ENCODE measurements at regions of chr6 and their contacts with region 1.

Region 1: DNA sequence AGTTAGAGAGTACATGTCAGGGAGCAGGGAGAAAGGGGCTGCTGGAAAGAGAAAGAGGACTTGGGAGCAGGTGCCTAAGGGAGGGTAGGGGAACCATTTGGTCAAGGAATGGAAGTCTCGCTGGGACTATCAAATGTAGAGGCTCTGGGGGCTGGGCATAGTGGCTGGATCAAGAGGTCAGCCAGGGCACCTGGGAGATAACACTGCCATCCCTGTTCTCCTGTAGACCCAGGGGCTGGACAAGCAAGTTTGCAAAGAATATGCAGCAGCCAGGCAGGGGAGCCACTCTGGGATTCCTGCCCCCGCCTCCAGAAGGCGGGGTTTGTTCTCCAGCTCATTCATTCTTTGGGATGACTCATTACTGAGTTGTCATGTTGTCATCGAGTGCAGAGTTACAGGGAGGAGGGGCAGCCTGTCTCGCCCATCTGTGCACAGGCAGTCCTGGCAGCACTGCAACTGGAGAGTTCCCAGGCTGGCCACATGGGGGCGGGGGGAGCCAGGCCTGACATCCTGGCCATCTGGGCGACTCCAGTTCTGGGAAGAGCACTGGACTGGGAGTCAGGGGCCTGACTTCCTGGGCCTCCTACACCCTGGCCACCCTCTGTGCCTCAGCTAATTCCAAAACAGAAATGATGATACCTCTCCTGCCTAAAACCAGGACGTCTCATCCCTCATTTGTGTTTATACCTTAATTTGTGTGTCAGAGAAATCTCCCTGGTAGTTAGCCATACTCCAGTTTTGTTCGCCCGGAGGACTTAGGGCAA is 28.2 kb upstream of the ZFAND3 start:
- DNase-seq: peak; percentile 90 to 91
- ATAC-seq: peak; percentile 97 to 99 (median 98)
- H3K4me3 ChIP-seq: no peak overlapping the region
- H3K27ac ChIP-seq: no peak overlapping the region
- H3K4me1 ChIP-seq: peaks cover 0 to 21% (median 11%) of the 10 kb centered on the region in 9 donors
- H3K27me3 ChIP-seq: no peaks in the 10 kb centered on the region
- CTCF ChIP-seq: peak; percentile 88 to 98 (median 96)

Region 2: DNA sequence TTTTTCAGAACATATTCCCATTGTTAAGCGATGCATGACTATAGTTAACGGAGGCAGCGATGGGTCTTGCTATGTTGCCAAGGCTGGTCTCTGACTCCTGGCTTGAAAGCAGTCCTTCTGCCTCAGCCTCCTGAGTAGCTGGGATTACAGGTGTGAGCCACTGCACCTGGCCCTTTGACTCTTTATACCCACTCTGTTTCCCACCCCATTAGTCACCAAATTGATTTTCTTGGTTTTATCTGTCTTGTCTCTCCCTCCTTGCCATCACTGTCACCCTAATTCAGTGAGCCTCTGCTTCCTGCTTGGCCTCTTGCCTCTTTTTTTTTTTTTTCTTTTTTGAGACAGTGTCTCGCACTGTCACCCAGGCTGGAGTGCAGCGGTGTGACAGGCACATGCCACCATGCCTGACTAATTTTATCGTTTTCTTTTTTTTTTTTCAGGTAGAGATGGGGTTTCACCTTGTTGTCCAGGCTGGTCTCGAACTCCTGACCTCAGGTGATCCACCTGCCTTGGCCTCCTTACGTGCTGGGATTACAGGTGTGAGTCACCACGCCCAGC is 59.5 kb after region 1 on chr6:
- intact Hi-C with region 1: loop called in 3 of 10 experiments (anchors 5 to 10 kb)
- DNase-seq: no peak
- ATAC-seq: peak in 4 of 8 donors; percentile 19 to 42 (median 36)
- H3K4me3 ChIP-seq: no peak overlapping the region
- H3K27ac ChIP-seq: no peak overlapping the region
- H3K4me1 ChIP-seq: peaks cover 4 to 64% (median 48%) of the 10 kb centered on the region in 9 donors
- H3K27me3 ChIP-seq: no peaks in the 10 kb centered on the region
- CTCF ChIP-seq: no peak

Region 3: DNA sequence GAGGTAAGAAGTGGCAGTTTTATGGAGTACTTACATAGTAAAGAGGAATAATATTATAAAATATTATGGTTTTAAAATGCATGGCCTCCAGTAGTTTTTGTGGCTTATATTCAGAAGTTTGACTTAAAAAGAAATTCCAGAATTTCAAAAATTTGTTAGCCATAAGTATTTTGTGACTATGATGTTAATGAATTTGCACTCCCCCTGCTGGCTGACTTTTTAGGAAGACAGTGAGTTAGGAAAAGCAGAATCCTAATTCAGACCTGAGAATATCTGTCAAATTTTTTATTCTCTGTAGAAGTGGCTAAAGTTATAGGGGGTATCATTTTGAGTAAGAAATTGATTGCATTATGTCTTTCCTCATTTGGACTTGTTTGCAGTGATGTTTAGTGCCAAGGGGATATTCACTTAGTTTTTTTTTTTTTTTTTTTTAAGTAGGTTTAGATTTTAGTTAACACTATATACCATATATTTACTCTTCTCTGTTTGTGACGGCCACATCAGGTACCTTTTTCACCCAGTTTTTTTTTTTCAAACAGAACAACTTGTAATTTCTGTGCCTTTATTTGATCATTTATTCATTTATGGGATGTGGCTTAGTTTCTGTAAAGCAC is 69.0 kb after region 1 on chr6:
- intact Hi-C with region 1: loop called in 5 of 10 experiments (anchors 1 to 10 kb)
- DNase-seq: peak in 1 of 2 donors; percentile 34
- ATAC-seq: no peak
- H3K4me3 ChIP-seq: no peak overlapping the region
- H3K27ac ChIP-seq: no peak overlapping the region
- H3K4me1 ChIP-seq: peaks cover 0 to 62% (median 4%) of the 10 kb centered on the region in 9 donors
- H3K27me3 ChIP-seq: no peaks in the 10 kb centered on the region
- CTCF ChIP-seq: peak; percentile 19 to 73 (median 64)

Region 4: GRCh38 chr6:38001386-38001785 is 210.0 kb after region 1 on chr6:
- intact Hi-C with region 1: loop called in 1 of 10 experiments (anchors 5 kb)
- DNase-seq: no peak
- ATAC-seq: peak in 2 of 8 donors; percentile 16 to 19
- H3K4me3 ChIP-seq: no peak overlapping the region
- H3K27ac ChIP-seq: no peak overlapping the region
- H3K4me1 ChIP-seq: peaks cover 0 to 26% (median 14%) of the 10 kb centered on the region in 9 donors
- H3K27me3 ChIP-seq: no peaks in the 10 kb centered on the region
- CTCF ChIP-seq: no peak

Region 5: DNA sequence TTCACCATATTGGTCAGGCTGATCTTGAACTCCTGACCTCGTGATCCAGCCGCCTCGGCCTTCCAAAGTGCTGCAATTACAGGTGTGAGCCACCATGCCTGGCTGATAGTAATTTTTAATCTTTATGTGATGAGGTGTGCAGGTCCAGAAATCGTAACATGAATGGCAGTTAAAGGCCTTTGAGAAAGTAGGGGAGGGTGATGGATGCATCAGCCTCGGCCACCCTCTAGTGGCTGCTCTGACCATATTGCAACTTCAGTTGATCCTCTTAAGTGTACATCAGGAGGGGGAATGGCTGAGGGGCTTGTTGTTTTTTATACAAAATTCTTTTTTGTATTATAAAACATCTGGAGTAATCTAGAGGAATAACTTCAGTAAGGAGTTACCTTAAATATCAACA is 221.2 kb after region 1 on chr6:
- intact Hi-C with region 1: loop called (anchors 2 to 10 kb)
- DNase-seq: no peak
- ATAC-seq: peak in 6 of 8 donors; percentile 52 to 80 (median 72)
- H3K4me3 ChIP-seq: no peak overlapping the region
- H3K27ac ChIP-seq: no peak overlapping the region
- H3K4me1 ChIP-seq: peaks cover 0 to 39% (median 13%) of the 10 kb centered on the region in 9 donors
- H3K27me3 ChIP-seq: no peaks in the 10 kb centered on the region
- CTCF ChIP-seq: peak; percentile 30 to 76 (median 66)

Region 6: DNA sequence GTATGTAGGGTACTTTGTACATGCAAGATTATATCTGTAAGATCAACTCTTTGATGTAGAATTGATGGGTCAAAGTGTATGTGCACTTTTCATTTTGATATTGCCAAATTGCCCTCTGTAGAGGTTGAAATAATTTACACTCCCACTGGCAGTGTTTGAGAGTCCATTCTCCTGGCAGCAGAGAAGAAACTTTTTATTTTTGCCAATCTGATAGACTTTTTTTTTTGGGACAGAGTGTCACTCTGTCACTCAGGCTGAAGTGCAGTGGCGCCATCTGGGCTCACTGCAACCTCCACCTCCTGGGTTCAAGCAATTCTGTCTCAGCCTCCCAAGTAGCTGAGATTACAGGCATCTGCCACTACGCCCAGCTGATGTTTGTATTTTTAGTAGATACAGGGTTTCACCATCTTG is 227.4 kb after region 1 on chr6:
- intact Hi-C with region 1: loop called in 9 of 10 experiments (anchors 2 to 10 kb)
- DNase-seq: no peak
- ATAC-seq: no peak
- H3K4me3 ChIP-seq: no peak overlapping the region
- H3K27ac ChIP-seq: no peak overlapping the region
- H3K4me1 ChIP-seq: peaks cover 0 to 44% (median 24%) of the 10 kb centered on the region in 9 donors
- H3K27me3 ChIP-seq: no peaks in the 10 kb centered on the region
- CTCF ChIP-seq: no peak

Region 7: GRCh38 chr6:38493931-38494547 is 702.7 kb after region 1 on chr6:
- intact Hi-C with region 1: loop called (anchors 2 to 10 kb)
- DNase-seq: peak; percentile 34 to 70
- ATAC-seq: peak in 2 of 8 donors; percentile 42 to 43
- H3K4me3 ChIP-seq: no peak overlapping the region
- H3K27ac ChIP-seq: no peak overlapping the region
- H3K4me1 ChIP-seq: peaks cover 0 to 12% (median 0%) of the 10 kb centered on the region in 9 donors
- H3K27me3 ChIP-seq: no peaks in the 10 kb centered on the region
- CTCF ChIP-seq: peak; percentile 91 to 98 (median 94)

Measured in heart right ventricle (tissue), 16 donors.